ENCODE measurements at regions of chr11 and their contacts with region 1.

Region 1: DNA sequence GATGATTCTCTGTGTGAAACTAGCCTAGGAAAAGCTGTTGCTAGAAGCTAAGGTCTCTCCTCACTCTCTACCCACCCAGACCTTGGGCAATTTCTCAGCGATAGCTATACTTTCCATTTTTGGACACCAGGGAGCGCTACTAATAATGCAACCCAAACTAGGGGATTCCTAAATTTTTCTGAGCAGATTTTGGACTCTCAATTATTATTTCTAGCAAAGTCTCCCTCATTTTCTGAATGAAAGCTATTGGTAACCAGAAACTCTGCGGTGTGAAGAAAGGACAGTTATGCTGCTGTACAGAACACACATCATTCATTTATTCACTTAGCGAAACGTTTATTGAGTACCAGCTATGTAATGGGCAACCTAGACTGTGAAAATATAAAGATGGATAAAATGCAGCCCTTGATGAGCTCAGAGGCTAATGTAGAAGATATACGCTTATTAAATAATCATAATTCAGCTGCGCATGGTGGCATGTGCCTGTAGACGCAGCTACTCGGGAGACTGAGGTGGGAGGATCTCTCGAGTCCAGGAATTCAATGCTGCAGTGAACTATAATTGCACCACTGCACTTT is 6.1 kb upstream of the STIM1 start:
- H3K4me3 Mint-ChIP-seq: no peak overlapping the region
- H3K27ac Mint-ChIP-seq: no peak overlapping the region
- H3K4me1 Mint-ChIP-seq: peaks cover 30% of the 10 kb centered on the region
- H3K27me3 Mint-ChIP-seq: no peaks in the 10 kb centered on the region

Region 2: GRCh38 chr11:3685923-3686322 is 163.5 kb before region 1 on chr11:
- intact Hi-C with region 1: no loop called
- H3K4me3 Mint-ChIP-seq: no peak overlapping the region
- H3K27ac Mint-ChIP-seq: no peak overlapping the region
- H3K4me1 Mint-ChIP-seq: no peaks in the 10 kb centered on the region
- H3K27me3 Mint-ChIP-seq: no peaks in the 10 kb centered on the region

Region 3: DNA sequence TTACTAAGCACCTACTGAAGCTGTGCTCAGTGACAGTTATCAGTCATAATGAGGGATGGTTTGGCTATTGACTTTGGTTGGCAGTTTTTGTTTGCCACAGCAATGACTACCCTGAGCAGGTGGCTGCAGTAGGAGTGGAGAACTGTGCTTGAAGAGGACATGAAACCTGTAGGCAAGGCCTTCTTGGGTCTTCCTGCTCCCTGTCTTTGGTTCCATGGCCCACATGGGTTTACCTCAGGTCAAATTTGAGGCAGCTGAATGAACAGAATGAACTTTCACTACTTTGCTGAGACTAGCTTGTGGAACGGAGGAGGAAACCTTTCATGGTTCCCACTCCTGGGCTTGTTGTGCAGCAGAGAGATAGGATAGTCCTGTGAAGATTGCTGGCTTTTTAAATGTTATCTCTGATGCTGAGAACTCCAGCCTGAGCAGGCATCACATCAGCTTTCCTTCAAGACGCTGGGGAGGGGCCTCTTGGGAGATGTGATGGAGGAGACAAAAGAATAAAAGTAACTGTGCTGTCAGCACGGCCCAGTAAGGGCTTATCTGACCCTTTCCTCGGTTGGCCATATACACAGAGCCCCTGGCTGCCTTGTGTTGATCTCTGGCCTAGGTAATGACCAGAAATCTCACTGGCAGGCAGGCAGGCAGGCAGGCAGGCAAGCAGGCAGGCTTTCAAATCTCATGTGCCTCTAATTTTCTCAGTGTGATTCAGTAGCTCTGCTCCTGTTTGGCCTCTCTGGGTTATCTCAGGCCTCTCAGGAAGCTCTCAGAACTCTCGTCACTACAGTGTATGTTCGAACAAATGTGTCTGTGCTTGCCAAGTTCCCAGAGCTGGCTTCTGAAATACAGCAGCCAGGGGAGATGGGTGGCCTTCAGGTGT is 18.1 kb after region 1 on chr11:
- intact Hi-C with region 1: no loop called
- H3K4me3 Mint-ChIP-seq: no peak overlapping the region
- H3K27ac Mint-ChIP-seq: no peak overlapping the region
- H3K4me1 Mint-ChIP-seq: peaks cover 57% of the 10 kb centered on the region
- H3K27me3 Mint-ChIP-seq: no peaks in the 10 kb centered on the region

Region 4: GRCh38 chr11:4072668-4073285 is 223.4 kb after region 1 on chr11:
- intact Hi-C with region 1: loop called (anchors 1 kb)
- H3K4me3 Mint-ChIP-seq: no peak overlapping the region
- H3K27ac Mint-ChIP-seq: no peak overlapping the region
- H3K4me1 Mint-ChIP-seq: peaks cover 26% of the 10 kb centered on the region
- H3K27me3 Mint-ChIP-seq: no peaks in the 10 kb centered on the region

Region 5: GRCh38 chr11:4375431-4376140 is 526.2 kb after region 1 on chr11:
- intact Hi-C with region 1: no loop called
- H3K4me3 Mint-ChIP-seq: no peak overlapping the region
- H3K27ac Mint-ChIP-seq: no peak overlapping the region
- H3K4me1 Mint-ChIP-seq: no peaks in the 10 kb centered on the region
- H3K27me3 Mint-ChIP-seq: no peaks in the 10 kb centered on the region

Measured in dendritic cell treated with granulocyte-macrophage colony-stimulating factor and Interleukin-4, amounts not matched to agents 40 ng/mL and 50 ng/mL, for 4 days (primary cell).